Aorta (tissue), 5 donors: ENCODE measurements at regions of chr2 and their contacts with region 1.

Region 1: DNA sequence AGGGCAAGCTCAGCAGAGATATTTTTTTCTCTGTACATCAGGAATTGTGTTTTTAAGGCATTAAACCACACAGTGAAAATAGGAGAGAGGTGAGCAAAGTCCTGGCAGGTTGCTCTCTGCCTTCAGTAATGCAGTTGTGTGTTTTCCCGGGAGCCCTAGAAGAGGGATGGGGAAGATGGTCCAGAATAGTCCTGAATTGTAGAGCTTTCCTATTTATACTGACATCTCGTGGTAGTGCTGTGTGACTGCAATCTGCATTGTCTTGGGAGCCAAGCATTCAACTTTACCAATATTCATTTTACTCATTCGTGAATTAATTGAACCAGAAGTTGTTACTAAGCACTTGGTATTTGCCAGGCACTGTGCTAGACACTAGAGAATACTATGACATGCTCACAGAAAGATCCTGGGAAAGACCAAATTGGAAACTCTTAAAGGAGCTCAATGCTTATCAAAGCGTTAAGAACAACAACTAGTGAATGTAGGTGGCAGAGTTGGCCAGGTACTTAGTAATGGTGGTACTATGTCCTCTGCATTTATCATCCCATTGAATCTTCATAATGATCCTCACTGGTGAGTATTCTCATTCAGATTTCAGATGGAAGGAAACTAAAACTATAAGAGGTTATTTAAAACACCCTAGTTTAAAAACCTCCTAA is 214.6 kb downstream of the TRIB2 start:
- DNase-seq: no peak
- ATAC-seq: peak; percentile 83
- H3K4me3 ChIP-seq: no peak overlapping the region
- H3K27ac ChIP-seq: no peak overlapping the region
- H3K4me1 ChIP-seq: no peaks in the 10 kb centered on the region
- H3K27me3 ChIP-seq: no peaks in the 10 kb centered on the region

Region 2: GRCh38 chr2:11829947-11830707 is 1101.2 kb before region 1 on chr2:
- intact Hi-C with region 1: loop called (anchors 10 kb)
- DNase-seq: peak; percentile 79 to 82
- ATAC-seq: peak; percentile 85
- H3K4me3 ChIP-seq: peak overlapping the region; percentile 25 to 65
- H3K27ac ChIP-seq: peak overlapping the region in 1 of 2 donors; percentile 91
- H3K4me1 ChIP-seq: no peaks in the 10 kb centered on the region
- H3K27me3 ChIP-seq: no peaks in the 10 kb centered on the region

Region 3: DNA sequence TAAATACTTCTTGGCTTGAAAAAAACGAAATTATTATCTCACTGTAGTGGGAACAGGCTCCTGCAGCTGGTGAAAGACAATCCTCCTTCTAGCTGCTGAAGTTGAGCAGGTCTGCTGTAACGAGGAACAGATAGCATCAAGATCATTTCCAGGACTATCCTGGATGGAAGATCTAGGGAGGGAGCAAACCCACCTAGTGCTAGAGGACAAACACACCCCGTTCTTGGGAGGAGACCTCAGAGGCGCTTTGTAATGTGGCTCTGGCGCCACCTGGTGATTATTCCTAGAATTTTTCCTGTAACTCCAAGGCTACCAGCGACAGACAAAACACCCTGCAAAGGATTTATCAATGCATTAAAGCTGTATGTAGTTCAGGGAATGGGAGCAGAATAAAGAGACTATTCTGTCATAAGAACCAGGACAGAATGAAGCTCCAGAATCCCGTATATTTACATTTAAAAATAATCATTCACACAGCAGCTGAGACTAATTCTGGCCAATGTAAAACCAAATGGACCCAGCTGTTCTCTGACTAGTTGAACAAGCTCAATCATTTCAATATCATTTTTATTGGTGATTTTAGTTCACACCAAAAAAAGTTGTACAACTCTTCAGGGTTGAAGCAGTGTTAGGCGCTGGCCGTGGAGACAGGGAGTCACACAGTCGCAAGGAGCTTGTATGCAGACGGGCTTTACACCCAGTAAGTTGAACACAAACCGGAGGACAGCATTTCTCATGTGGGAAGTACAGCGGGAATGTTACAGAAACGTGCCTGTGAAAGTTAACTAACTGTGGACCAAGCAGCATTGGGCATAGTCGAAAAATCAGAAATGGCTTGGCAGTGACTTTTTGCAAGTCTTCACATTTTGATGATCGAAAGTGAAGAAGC is 75.8 kb after region 1 on chr2:
- intact Hi-C with region 1: loop called in 1 of 2 experiments (anchors 10 kb)
- DNase-seq: peak; percentile 55 to 77
- ATAC-seq: peak; percentile 87
- H3K4me3 ChIP-seq: no peak overlapping the region
- H3K27ac ChIP-seq: no peak overlapping the region
- H3K4me1 ChIP-seq: no peaks in the 10 kb centered on the region
- H3K27me3 ChIP-seq: no peaks in the 10 kb centered on the region